ENCODE measurements at regions of chr7 and their contacts with region 1.

Region 1: GRCh38 chr7:114554781-114555537 is 140.3 kb downstream of the FOXP2 start:
- DNase-seq: no peak
- ATAC-seq: peak; percentile 95 to 99 (median 98)
- H3K4me3 ChIP-seq: peak overlapping the region; percentile 13
- H3K27ac ChIP-seq: peak overlapping the region; percentile 67
- H3K4me1 ChIP-seq: peaks cover 11% of the 10 kb centered on the region
- H3K27me3 ChIP-seq: no peaks in the 10 kb centered on the region
- CTCF ChIP-seq: no peak

Region 2: GRCh38 chr7:114813624-114814023 is 258.7 kb after region 1 on chr7:
- intact Hi-C with region 1: loop called in 1 of 2 experiments (anchors 5 kb)
- DNase-seq: no peak
- ATAC-seq: no peak
- H3K4me3 ChIP-seq: no peak overlapping the region
- H3K27ac ChIP-seq: no peak overlapping the region
- H3K4me1 ChIP-seq: no peaks in the 10 kb centered on the region
- H3K27me3 ChIP-seq: no peaks in the 10 kb centered on the region
- CTCF ChIP-seq: no peak

Measured in psoas muscle (tissue), 8 donors.